ENCODE measurements at regions of chr12 and their contacts with region 1.

Region 1: GRCh38 chr12:107992870-107993451 is 136.1 kb upstream of the WSCD2 start:
- DNase-seq: peak; percentile 32 to 39
- H3K4me3 ChIP-seq: no peak overlapping the region
- H3K27ac ChIP-seq: no peak overlapping the region
- H3K4me1 ChIP-seq: no peaks in the 10 kb centered on the region
- H3K27me3 ChIP-seq: no peaks in the 10 kb centered on the region
- CTCF ChIP-seq: peak; percentile 30 to 68 (median 54)
- POLR2A ChIP-seq: no peak

Region 2: DNA sequence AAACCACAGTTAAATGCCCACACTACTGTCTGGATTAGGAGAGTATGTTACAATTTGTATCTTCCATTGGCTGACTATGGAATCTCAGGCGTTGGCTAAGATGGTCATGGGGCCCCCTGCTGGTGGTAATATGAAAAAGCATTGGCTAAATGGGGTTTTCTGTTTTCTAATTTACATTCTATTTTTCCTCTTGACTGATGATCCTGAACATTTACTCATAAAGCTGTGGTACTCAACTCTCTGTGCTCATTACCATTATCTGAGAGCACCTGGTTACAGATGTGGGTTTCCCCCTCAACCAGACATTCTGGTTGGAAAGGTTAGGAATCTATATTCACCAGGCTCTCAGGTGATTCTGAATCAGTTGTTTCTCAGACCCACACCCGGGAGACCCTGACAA is 201.0 kb after region 1 on chr12:
- intact Hi-C with region 1: loop called (anchors 10 kb)
- DNase-seq: peak; percentile 58 to 63
- H3K4me3 ChIP-seq: no peak overlapping the region
- H3K27ac ChIP-seq: no peak overlapping the region
- H3K4me1 ChIP-seq: peaks cover 38 to 48% of the 10 kb centered on the region in 2 donors
- H3K27me3 ChIP-seq: no peaks in the 10 kb centered on the region
- CTCF ChIP-seq: peak; percentile 47 to 88 (median 83)
- POLR2A ChIP-seq: no peak

Region 3: GRCh38 chr12:108457006-108457733 is 464.2 kb after region 1 on chr12:
- intact Hi-C with region 1: loop called (anchors 10 kb)
- DNase-seq: peak; percentile 4 to 9
- H3K4me3 ChIP-seq: no peak overlapping the region
- H3K27ac ChIP-seq: no peak overlapping the region
- H3K4me1 ChIP-seq: no peaks in the 10 kb centered on the region
- H3K27me3 ChIP-seq: no peaks in the 10 kb centered on the region
- CTCF ChIP-seq: peak; percentile 22 to 74 (median 60)
- POLR2A ChIP-seq: no peak

Measured in thyroid gland (tissue), 4 donors.